ENCODE measurements at regions of chr10 and their contacts with region 1.

Region 1: GRCh38 chr10:93293999-93294398 is 188.1 kb downstream of the MYOF start:
- DNase-seq: no peak
- H3K4me3 ChIP-seq: no peak overlapping the region
- H3K27ac ChIP-seq: no peak overlapping the region
- H3K4me1 ChIP-seq: no peaks in the 10 kb centered on the region
- H3K27me3 ChIP-seq: no peaks in the 10 kb centered on the region
- CTCF ChIP-seq: no peak
- POLR2A ChIP-seq: no peak

Region 2: GRCh38 chr10:93080350-93081046 is 213.5 kb before region 1 on chr10:
- intact Hi-C with region 1: loop called (anchors 10 kb)
- DNase-seq: no peak
- H3K4me3 ChIP-seq: no peak overlapping the region
- H3K27ac ChIP-seq: no peak overlapping the region
- H3K4me1 ChIP-seq: peaks cover 0 to 9% (median 0%) of the 10 kb centered on the region in 3 donors
- H3K27me3 ChIP-seq: peaks cover 0 to 70% (median 0%) of the 10 kb centered on the region in 4 donors
- CTCF ChIP-seq: peak; percentile 64 to 76 (median 68)
- POLR2A ChIP-seq: no peak

Region 3: GRCh38 chr10:93280699-93281366 is 13.2 kb before region 1 on chr10:
- intact Hi-C with region 1: no loop called
- DNase-seq: no peak
- H3K4me3 ChIP-seq: no peak overlapping the region
- H3K27ac ChIP-seq: no peak overlapping the region
- H3K4me1 ChIP-seq: no peaks in the 10 kb centered on the region
- H3K27me3 ChIP-seq: no peaks in the 10 kb centered on the region
- CTCF ChIP-seq: no peak
- POLR2A ChIP-seq: no peak

Region 4: GRCh38 chr10:93413252-93413689 is 119.3 kb after region 1 on chr10:
- intact Hi-C with region 1: no loop called
- DNase-seq: no peak
- H3K4me3 ChIP-seq: no peak overlapping the region
- H3K27ac ChIP-seq: peak overlapping the region; percentile 62 to 82 (median 71)
- H3K4me1 ChIP-seq: peaks cover 14 to 28% (median 17%) of the 10 kb centered on the region in 3 donors
- H3K27me3 ChIP-seq: no peaks in the 10 kb centered on the region
- CTCF ChIP-seq: no peak
- POLR2A ChIP-seq: no peak

Measured in esophagus squamous epithelium (tissue), 5 donors.